Heart left ventricle (tissue), 16 donors: ENCODE measurements at regions of chr9 and their contacts with region 1.

Region 1: DNA sequence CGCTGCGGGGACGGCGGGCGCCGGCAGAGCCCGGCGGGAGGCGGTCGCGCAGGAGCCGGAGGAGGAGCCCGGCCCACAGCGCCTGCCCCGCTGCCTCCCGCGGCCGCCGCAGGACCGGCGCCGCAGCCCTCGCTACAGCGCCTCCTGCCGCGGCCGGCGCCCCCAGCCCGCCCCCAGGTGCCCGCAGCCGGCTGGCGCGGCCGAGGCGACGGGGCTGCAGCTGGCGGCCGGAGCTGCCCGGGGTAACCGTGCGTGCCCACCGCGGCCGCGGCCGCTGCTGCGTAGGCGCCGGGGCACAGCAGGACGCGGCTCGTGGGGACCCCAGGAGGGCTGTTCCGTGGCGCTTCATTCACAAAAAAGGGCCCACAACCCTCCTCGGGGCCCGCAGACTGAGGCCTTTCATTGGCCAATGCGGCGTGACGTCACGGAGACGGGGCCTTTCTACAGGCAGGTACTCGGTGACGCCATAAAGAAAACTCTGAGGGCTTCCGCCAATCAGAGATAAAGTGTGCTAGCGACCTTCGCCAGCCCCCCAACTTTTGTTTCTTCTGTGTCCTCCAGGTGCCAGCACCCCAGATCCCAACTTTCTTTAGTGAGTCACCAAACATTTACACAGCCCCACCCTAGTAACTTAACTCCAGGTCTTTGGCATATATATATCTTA is at the start of gene CDC14B:
- DNase-seq: peak; percentile 87 to 96 (median 92)
- ATAC-seq: peak; percentile 50 to 82 (median 78)
- H3K4me3 ChIP-seq: peak within 1 kb of the TSS; percentile 58 to 89 (median 78)
- H3K27ac ChIP-seq: peak within 1 kb of the TSS; percentile 72 to 92 (median 88)
- H3K4me1 ChIP-seq: peaks cover 0 to 12% (median 2%) of the 10 kb centered on the region in 12 donors
- H3K27me3 ChIP-seq: peaks cover 0 to 14% (median 0%) of the 10 kb centered on the region in 9 donors
- CTCF ChIP-seq: peak in 2 of 12 donors; percentile 21 to 28
- POLR2A ChIP-seq: peak in 1 of 2 donors; percentile 16
- total RNA-seq, gene CDC14B: 18.8 to 37.0 (median 26.9) TPM

Region 2: DNA sequence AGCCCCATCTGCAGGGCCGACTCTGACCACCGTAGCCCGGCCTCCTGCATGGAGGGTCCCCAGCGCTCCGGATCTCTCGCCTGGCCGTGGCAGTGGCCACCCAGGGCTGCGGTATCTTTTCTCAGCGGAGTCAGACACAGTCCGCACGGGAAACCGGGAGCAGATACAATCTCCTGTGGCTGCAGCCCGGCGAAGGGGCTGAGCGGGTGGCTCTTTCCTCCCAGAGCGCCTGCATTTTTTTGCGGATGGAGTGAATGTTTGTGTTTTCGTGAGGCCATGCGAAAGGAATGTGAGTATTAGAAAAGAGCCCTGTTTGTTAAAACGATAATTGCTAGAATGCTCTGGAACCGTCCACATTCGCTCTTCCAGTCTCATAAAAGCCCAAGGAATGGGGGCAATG is 1049.5 kb before region 1 on chr9:
- intact Hi-C with region 1: no loop called
- DNase-seq: no peak
- ATAC-seq: no peak
- H3K4me3 ChIP-seq: peak overlapping the region in 8 of 12 donors; percentile 16 to 50 (median 28)
- H3K27ac ChIP-seq: no peak overlapping the region
- H3K4me1 ChIP-seq: peaks cover 0 to 14% (median 0%) of the 10 kb centered on the region in 12 donors
- H3K27me3 ChIP-seq: peaks cover 0 to 47% (median 6%) of the 10 kb centered on the region in 9 donors
- CTCF ChIP-seq: no peak
- POLR2A ChIP-seq: no peak

Region 3: DNA sequence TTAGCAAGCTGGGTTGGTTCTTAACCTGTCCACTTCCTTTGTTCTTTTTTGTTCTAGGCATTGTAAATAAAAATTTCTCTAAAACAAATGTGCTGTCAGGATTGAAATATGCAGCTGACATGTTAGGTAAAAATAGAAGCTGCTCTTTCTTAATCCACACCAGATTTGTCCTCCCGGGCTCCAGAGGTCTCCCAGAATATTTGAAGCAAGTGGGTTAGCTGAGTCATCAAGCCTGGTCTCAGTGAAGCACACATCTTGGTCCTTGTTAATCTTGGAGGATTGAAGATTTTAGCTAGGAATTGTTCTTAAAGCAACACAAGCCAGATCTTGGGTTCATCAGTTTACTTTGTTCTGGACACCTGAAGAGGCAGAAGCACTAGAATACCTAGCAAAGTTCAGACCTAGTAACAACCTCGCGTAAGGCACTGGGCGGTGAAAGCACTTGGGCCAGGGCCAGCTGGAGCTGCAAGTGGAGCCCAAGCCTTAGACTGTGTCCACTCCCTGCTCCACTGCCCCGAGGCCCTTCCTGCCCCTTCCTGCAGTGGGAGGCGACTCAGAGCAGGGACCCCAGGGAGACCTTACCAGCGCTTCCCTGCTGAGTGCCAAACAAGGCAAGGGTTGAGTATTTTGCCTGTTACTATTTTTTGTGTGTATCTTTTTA is 133.1 kb before region 1 on chr9:
- intact Hi-C with region 1: loop called in 1 of 10 experiments (anchors 10 kb)
- DNase-seq: peak in 4 of 5 donors; percentile 73 to 87 (median 78)
- ATAC-seq: peak; percentile 71 to 85 (median 78)
- H3K4me3 ChIP-seq: no peak overlapping the region
- H3K27ac ChIP-seq: peak overlapping the region in 11 of 12 donors; percentile 42 to 84 (median 71)
- H3K4me1 ChIP-seq: peaks cover 3 to 43% (median 30%) of the 10 kb centered on the region in 12 donors
- H3K27me3 ChIP-seq: no peaks in the 10 kb centered on the region
- CTCF ChIP-seq: no peak
- POLR2A ChIP-seq: no peak

Region 4: GRCh38 chr9:96553070-96553469 is 66.6 kb before region 1 on chr9:
- intact Hi-C with region 1: loop called in 2 of 10 experiments (anchors 5 kb)
- DNase-seq: no peak
- ATAC-seq: no peak
- H3K4me3 ChIP-seq: no peak overlapping the region
- H3K27ac ChIP-seq: peak overlapping the region in 6 of 12 donors; percentile 7 to 84 (median 70)
- H3K4me1 ChIP-seq: peaks cover 0 to 54% (median 40%) of the 10 kb centered on the region in 12 donors
- H3K27me3 ChIP-seq: no peaks in the 10 kb centered on the region
- CTCF ChIP-seq: no peak
- POLR2A ChIP-seq: no peak

Region 5: DNA sequence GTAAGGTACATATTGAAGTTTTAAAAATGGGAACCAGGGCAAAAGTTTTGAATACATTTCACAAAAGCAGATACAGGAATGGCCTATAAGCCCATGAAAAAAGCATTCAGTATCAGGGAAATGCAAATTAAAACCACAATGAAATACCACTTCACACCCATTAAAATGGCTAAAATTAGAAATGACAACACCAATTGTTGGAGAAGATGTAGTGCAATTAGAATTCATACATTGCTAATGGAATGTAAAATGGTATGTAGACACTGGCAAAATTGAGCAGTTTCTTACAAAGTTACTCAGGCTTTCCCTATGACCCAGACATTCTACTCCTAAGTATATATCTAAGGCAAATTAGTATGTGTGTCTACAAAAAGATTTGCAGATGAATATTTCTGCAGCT is 34.2 kb before region 1 on chr9:
- intact Hi-C with region 1: no loop called
- DNase-seq: no peak
- ATAC-seq: no peak
- H3K4me3 ChIP-seq: no peak overlapping the region
- H3K27ac ChIP-seq: no peak overlapping the region
- H3K4me1 ChIP-seq: peaks cover 0 to 11% (median 0%) of the 10 kb centered on the region in 12 donors
- H3K27me3 ChIP-seq: no peaks in the 10 kb centered on the region
- CTCF ChIP-seq: no peak
- POLR2A ChIP-seq: no peak

Region 6: GRCh38 chr9:96758845-96759673 is 139.4 kb after region 1 on chr9:
- intact Hi-C with region 1: no loop called
- DNase-seq: no peak
- ATAC-seq: no peak
- H3K4me3 ChIP-seq: no peak overlapping the region
- H3K27ac ChIP-seq: no peak overlapping the region
- H3K4me1 ChIP-seq: no peaks in the 10 kb centered on the region
- H3K27me3 ChIP-seq: no peaks in the 10 kb centered on the region
- CTCF ChIP-seq: no peak
- POLR2A ChIP-seq: no peak

Region 7: GRCh38 chr9:97109194-97109811 is 489.7 kb after region 1 on chr9:
- intact Hi-C with region 1: no loop called
- DNase-seq: peak in 2 of 5 donors; percentile 25 to 47
- ATAC-seq: peak in 2 of 4 donors; percentile 58 to 61
- H3K4me3 ChIP-seq: no peak overlapping the region
- H3K27ac ChIP-seq: no peak overlapping the region
- H3K4me1 ChIP-seq: no peaks in the 10 kb centered on the region
- H3K27me3 ChIP-seq: peaks cover 0 to 5% (median 0%) of the 10 kb centered on the region in 9 donors
- CTCF ChIP-seq: peak; percentile 18 to 61 (median 44)
- POLR2A ChIP-seq: no peak